Panc1 (cell line): ENCODE measurements at regions of chr1 and their contacts with region 1.

Region 1: GRCh38 chr1:222938986-222939385 is 124.1 kb downstream of the DISP1 start:
- DNase-seq: no peak
- ATAC-seq: no peak
- H3K4me3 ChIP-seq: no peak overlapping the region
- H3K27ac ChIP-seq: no peak overlapping the region
- H3K4me1 ChIP-seq: no peaks in the 10 kb centered on the region
- H3K27me3 ChIP-seq: no peaks in the 10 kb centered on the region
- CTCF ChIP-seq: no peak

Region 2: DNA sequence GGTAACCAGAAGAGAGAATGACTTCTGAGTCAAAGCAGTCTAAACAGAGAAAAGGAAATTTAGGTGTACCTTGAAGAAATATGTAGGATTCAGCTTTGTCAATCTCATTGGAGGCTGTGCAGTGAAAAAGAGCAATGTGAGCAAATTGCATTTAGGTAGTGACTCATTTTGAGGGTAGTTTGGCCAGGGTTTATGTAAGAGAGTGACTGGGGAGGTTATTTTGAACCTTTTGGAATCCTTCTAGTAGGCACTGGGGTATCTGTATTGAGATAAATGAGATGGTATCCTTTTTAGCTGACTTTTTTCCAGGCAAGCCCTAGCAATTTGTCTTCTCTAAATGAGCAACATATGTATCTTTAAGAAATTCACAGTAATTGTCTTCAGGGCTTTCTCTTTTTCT is 28.3 kb before region 1 on chr1:
- CTCF ChIA-PET with region 1: no interaction called
- POLR2A ChIA-PET with region 1: interaction called, 11 read pairs
- in situ Hi-C with region 1: no loop called
- intact Hi-C with region 1: no loop called
- DNase-seq: no peak
- ATAC-seq: no peak
- H3K4me3 ChIP-seq: no peak overlapping the region
- H3K27ac ChIP-seq: no peak overlapping the region
- H3K4me1 ChIP-seq: no peaks in the 10 kb centered on the region
- H3K27me3 ChIP-seq: no peaks in the 10 kb centered on the region
- CTCF ChIP-seq: no peak